CD4-positive, alpha-beta memory T cell (primary cell): ENCODE measurements at regions of chr7 and their contacts with region 1.

Region 1: DNA sequence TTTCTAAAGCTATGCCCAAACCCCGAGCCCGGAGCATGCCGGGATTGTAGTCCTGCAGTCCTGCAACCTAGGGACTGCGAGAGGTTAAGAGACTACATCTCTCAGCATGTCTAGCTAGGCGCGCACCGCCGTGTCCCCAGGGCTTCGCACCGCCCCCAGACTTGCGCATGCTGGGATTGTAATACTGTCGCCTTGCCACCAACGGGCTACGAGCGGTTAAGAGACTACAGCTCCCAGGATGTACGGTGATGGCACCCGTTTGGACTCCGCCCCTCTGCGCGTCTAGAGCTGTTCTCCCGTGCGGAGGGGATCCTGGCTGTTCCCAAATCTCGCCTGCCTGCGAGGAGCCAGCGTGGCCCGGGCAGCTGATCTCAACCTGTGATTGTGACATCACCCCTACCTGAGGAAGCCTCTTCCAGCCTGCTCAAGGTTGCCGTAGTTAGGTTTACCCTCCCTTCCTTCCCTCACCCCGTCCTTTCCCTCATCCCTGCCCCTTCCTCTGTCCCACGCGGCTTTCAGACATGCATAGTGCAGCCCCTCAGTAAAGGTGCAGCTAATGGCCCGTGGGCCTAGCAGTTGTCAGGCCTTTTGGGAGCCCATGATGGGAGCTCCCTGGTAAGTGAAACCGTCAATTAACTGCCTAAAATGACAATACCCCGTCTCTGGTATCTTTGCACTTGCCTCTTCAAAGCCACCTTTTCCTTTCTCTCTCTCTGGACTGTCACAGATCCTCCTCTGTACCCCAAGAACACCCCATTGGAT is 6.3 kb upstream of the ZNF736 start:
- DNase-seq: peak; percentile 91 to 97 (median 94)
- H3K4me3 ChIP-seq: peak overlapping the region; percentile 95 to 97
- H3K4me3 Mint-ChIP-seq: peak overlapping the region; percentile 92 to 100 (median 96)
- H3K27ac ChIP-seq: peak overlapping the region; percentile 71
- H3K27ac Mint-ChIP-seq: peak overlapping the region; percentile 94 to 99 (median 97)
- H3K4me1 ChIP-seq: peaks cover 13% of the 10 kb centered on the region
- H3K4me1 Mint-ChIP-seq: peaks cover 10 to 29% (median 16%) of the 10 kb centered on the region in 4 donors
- H3K27me3 ChIP-seq: no peaks in the 10 kb centered on the region
- H3K27me3 Mint-ChIP-seq: no peaks in the 10 kb centered on the region

Region 2: GRCh38 chr7:63925623-63926460 is 381.6 kb before region 1 on chr7:
- CTCF ChIA-PET with region 1: interaction called, 3 read pairs
- POLR2A ChIA-PET with region 1: interaction called, 15 read pairs
- intact Hi-C with region 1: no loop called
- DNase-seq: peak; percentile 86 to 96 (median 94)
- H3K4me3 ChIP-seq: peak overlapping the region; percentile 58 to 73
- H3K4me3 Mint-ChIP-seq: peak overlapping the region; percentile 94 to 99 (median 98)
- H3K27ac ChIP-seq: peak overlapping the region; percentile 64
- H3K27ac Mint-ChIP-seq: peak overlapping the region; percentile 90 to 98 (median 97)
- H3K4me1 ChIP-seq: peaks cover 6% of the 10 kb centered on the region
- H3K4me1 Mint-ChIP-seq: peaks cover 3 to 18% (median 12%) of the 10 kb centered on the region in 4 donors
- H3K27me3 ChIP-seq: no peaks in the 10 kb centered on the region
- H3K27me3 Mint-ChIP-seq: no peaks in the 10 kb centered on the region

Region 3: DNA sequence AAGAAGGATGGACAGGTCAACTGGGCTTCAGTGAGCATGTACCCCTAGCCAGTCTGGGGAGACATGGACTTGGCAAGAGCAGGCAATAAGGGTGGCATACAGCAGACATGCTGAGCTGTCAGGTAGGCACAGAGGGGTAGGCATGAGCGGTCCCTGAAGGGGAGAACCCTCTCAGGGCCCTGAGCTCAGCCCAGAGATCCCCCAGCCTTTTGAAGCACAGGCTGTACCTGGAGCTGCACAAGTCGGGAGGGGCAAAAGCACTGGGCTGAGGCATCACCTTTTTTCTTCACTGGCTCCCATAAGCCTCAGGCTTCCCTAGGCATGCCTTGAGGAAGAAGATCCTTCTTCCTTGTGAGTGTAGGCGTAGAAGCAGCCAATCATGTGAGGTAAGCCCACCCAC is 219.9 kb before region 1 on chr7:
- CTCF ChIA-PET with region 1: no interaction called
- POLR2A ChIA-PET with region 1: no interaction called
- intact Hi-C with region 1: no loop called
- DNase-seq: no peak
- H3K4me3 ChIP-seq: no peak overlapping the region
- H3K4me3 Mint-ChIP-seq: no peak overlapping the region
- H3K27ac ChIP-seq: no peak overlapping the region
- H3K27ac Mint-ChIP-seq: no peak overlapping the region
- H3K4me1 ChIP-seq: no peaks in the 10 kb centered on the region
- H3K4me1 Mint-ChIP-seq: no peaks in the 10 kb centered on the region
- H3K27me3 ChIP-seq: no peaks in the 10 kb centered on the region
- H3K27me3 Mint-ChIP-seq: no peaks in the 10 kb centered on the region

Region 4: GRCh38 chr7:64665980-64666662 is 358.7 kb after region 1 on chr7 and contains the start of gene ZNF107:
- CTCF ChIA-PET with region 1: interaction called, 3 read pairs
- POLR2A ChIA-PET with region 1: interaction called, 15 read pairs
- intact Hi-C with region 1: loop called (anchors 1 kb)
- DNase-seq: peak; percentile 86 to 92 (median 88)
- H3K4me3 ChIP-seq: peak within 1 kb of the TSS; percentile 85 to 90
- H3K4me3 Mint-ChIP-seq: peak within 1 kb of the TSS; percentile 97 to 98 (median 97)
- H3K27ac ChIP-seq: peak within 1 kb of the TSS; percentile 92
- H3K27ac Mint-ChIP-seq: peak within 1 kb of the TSS; percentile 97 to 99 (median 98)
- H3K4me1 ChIP-seq: peaks cover 38% of the 10 kb centered on the region
- H3K4me1 Mint-ChIP-seq: peaks cover 42 to 80% (median 59%) of the 10 kb centered on the region in 4 donors
- H3K27me3 ChIP-seq: no peaks in the 10 kb centered on the region
- H3K27me3 Mint-ChIP-seq: no peaks in the 10 kb centered on the region
- total RNA-seq, gene ZNF107: 30.2 to 30.9 TPM

Region 5: DNA sequence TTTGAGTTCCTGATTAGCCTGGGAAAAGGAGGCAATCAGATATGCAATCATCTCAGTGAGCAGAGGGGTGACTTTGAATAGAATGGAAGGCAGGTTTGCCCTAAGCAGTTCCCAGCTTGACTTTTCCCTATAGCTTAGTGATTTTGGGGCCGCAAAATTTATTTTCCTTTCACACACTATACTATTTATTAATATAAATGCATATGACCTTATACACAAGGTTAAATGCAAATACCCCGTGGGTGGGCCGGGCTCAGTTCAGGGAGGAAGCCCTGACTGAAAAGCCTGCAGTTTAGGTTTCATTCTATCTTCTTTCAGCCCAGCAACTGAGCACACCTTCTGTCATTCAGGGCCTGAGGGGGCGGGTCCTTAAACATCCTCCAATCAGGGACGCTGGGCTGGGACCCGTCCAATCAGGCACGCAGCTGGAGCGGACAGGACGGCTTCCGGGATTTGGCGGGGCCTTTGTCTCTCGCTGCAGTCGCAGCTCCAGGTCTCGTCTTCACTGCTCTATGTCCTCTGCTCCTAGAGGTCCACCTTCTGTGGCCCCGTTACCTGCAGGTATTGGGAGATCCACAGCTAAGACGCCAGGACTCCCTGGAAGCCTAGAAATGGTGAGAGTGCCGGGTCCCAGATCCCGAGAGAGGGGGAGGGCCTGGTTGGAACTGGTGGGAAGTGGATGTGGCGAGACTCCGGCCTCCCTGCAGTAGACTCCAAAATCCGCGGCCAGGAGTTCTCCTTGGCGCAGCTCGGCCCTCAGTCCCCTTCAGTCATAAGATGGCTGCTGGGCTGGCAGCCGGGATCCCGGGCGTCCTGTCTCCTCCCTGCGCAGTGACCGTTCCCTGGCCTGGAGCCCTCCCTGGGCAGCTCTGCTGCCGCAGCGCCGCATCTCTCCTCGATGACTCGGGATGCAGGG is 595.6 kb after region 1 on chr7 and contains the start of gene ZNF273:
- CTCF ChIA-PET with region 1: no interaction called
- POLR2A ChIA-PET with region 1: interaction called, 6 read pairs
- intact Hi-C with region 1: loop called (anchors 1 kb)
- DNase-seq: peak; percentile 89 to 95 (median 90)
- H3K4me3 ChIP-seq: peak within 1 kb of the TSS; percentile 67 to 71
- H3K4me3 Mint-ChIP-seq: peak within 1 kb of the TSS; percentile 96 to 98 (median 98)
- H3K27ac ChIP-seq: peak within 1 kb of the TSS; percentile 79
- H3K27ac Mint-ChIP-seq: peak within 1 kb of the TSS; percentile 92 to 97 (median 96)
- H3K4me1 ChIP-seq: peaks cover 43% of the 10 kb centered on the region
- H3K4me1 Mint-ChIP-seq: peaks cover 32 to 53% (median 39%) of the 10 kb centered on the region in 4 donors
- H3K27me3 ChIP-seq: no peaks in the 10 kb centered on the region
- H3K27me3 Mint-ChIP-seq: no peaks in the 10 kb centered on the region
- total RNA-seq, gene ZNF273: 8.3 to 8.9 TPM